Activated CD4-positive, alpha-beta memory T cell treated with anti-CD3 and anti-CD28 coated beads for 36 hours (primary cell): ENCODE measurements at regions of chr2 and their contacts with region 1.

Region 1: GRCh38 chr2:113602869-113603466 is 24.1 kb upstream of the RABL2A start:
- DNase-seq: no peak
- H3K4me3 Mint-ChIP-seq: peak overlapping the region; percentile 85
- H3K27ac Mint-ChIP-seq: peak overlapping the region; percentile 93
- H3K4me1 Mint-ChIP-seq: peaks cover 6% of the 10 kb centered on the region
- H3K27me3 Mint-ChIP-seq: no peaks in the 10 kb centered on the region

Region 2: DNA sequence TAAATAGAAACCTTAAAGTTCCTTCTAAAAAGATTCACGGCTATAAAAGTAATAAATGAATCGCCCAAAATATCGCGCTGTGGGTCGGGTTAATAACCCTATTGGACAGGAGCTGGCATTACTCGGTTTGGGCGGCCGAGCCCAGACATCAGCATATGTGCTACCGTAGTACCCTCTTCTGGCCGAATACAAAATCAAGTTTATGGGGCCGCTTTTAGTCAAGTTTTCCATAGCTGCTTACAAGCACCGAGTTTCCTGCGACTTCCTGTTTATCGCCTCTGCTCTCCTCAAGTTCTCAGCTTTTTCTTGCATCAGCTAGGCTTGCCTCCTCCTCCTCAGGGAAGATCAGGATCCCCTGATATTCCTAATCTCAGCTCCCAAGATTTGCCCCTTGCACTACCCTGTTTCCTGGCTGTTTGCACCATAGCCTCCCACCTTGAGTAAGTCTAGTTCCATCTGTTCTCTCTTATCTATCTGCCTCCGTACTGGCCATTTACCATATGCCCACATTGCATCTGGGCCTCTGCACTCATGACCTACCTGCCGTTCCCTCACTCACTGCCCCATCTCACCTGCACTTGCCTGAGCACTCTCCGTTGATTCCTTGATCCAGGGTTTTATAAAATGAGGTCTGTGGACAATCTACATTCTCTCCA is 97.3 kb after region 1 on chr2:
- CTCF ChIA-PET with region 1: interaction called, 18 read pairs
- POLR2A ChIA-PET with region 1: no interaction called
- intact Hi-C with region 1: loop called (anchors 1 kb)
- DNase-seq: peak; percentile 72
- H3K4me3 Mint-ChIP-seq: peak overlapping the region; percentile 52
- H3K27ac Mint-ChIP-seq: peak overlapping the region; percentile 59
- H3K4me1 Mint-ChIP-seq: peaks cover 28% of the 10 kb centered on the region
- H3K27me3 Mint-ChIP-seq: no peaks in the 10 kb centered on the region

Region 3: DNA sequence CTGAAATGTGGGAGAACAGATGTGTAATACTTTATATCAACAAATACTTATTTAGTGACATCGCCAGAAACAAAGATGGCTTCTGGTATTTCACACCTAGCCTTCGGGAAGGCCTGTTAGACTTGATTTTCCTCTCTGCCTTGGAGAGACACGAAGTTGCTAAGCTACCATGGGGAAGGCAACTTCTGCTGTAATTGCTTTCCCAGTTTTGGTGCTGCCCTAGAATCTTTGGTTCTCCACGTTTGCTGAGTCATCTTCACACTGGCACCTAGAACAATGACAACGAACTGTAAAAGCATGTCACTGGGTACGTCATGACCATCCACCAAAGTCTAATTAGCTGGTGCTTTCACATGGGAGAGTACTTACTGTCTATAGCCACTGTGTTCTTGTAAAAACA is 228.2 kb after region 1 on chr2:
- CTCF ChIA-PET with region 1: no interaction called
- POLR2A ChIA-PET with region 1: no interaction called
- intact Hi-C with region 1: no loop called
- DNase-seq: no peak
- H3K4me3 Mint-ChIP-seq: no peak overlapping the region
- H3K27ac Mint-ChIP-seq: no peak overlapping the region
- H3K4me1 Mint-ChIP-seq: no peaks in the 10 kb centered on the region
- H3K27me3 Mint-ChIP-seq: no peaks in the 10 kb centered on the region

Region 4: DNA sequence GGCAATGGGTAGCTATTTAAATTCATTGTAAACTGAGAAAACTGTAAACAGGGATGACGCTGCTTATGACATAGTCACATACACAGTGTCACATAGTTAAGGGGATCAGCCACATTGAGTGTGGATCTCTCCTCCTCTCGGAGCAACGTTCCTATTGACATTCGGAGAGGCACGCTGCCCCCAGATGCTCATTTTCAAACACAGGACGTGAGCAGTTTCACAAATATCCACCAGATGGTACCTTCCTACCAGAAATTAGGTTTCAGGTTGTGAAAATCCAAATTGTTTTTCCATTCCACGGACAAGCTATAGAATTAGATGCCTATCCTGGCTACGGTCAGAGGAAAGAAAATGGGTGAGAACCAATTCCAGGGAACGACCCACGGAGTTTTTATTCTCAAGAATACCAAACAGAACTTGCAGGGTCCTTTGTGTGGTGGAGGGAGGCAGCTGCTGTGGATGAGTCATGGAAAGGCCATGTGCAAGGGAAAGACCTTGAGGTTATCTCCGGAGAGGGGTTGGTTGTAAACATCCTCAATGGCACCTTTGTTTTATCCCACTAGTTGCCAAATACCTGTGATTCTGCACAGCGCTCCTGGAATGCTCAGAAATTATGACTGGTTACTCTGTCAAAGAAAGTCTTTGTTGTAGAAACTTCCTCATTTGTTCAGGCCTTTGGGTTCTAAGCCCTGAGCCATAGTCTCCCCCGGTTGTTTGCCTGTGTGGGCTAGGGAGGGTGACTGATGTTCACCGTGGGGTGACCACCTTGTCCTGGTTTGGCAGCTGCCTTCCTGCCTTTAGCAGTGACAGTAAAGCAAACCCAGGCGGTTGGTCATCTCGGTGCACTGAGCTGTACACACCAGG is 374.9 kb after region 1 on chr2:
- CTCF ChIA-PET with region 1: no interaction called
- POLR2A ChIA-PET with region 1: no interaction called
- intact Hi-C with region 1: loop called (anchors 5 kb)
- DNase-seq: no peak
- H3K4me3 Mint-ChIP-seq: no peak overlapping the region
- H3K27ac Mint-ChIP-seq: no peak overlapping the region
- H3K4me1 Mint-ChIP-seq: peaks cover 4% of the 10 kb centered on the region
- H3K27me3 Mint-ChIP-seq: no peaks in the 10 kb centered on the region